B cell (primary cell): ENCODE measurements at regions of chr14 and their contacts with region 1.

Region 1: GRCh38 chr14:91060351-91061055 is at the start of gene RPS6KA5:
- DNase-seq: peak; percentile 100
- ATAC-seq: peak; percentile 80
- H3K4me3 ChIP-seq: peak within 1 kb of the TSS; percentile 80 to 97 (median 87)
- H3K4me3 Mint-ChIP-seq: peak within 1 kb of the TSS; percentile 86
- H3K27ac ChIP-seq: peak within 1 kb of the TSS; percentile 97 to 98
- H3K27ac Mint-ChIP-seq: peak within 1 kb of the TSS; percentile 83
- H3K4me1 ChIP-seq: peaks cover 26 to 35% of the 10 kb centered on the region in 2 donors
- H3K4me1 Mint-ChIP-seq: peaks cover 46% of the 10 kb centered on the region
- H3K27me3 ChIP-seq: no peaks in the 10 kb centered on the region
- H3K27me3 Mint-ChIP-seq: no peaks in the 10 kb centered on the region
- CTCF ChIP-seq: peak; percentile 12
- total RNA-seq, gene RPS6KA5: 33.8 and 34.6 TPM in 2 replicates

Region 2: GRCh38 chr14:90827916-90828610 is 232.4 kb before region 1 on chr14:
- CTCF ChIA-PET with region 1: no interaction called
- POLR2A ChIA-PET with region 1: no interaction called
- intact Hi-C with region 1: loop called (anchors 2 kb)
- DNase-seq: peak; percentile 92
- ATAC-seq: peak; percentile 100
- H3K4me3 ChIP-seq: peak overlapping the region; percentile 44 to 58 (median 51)
- H3K4me3 Mint-ChIP-seq: peak overlapping the region; percentile 77
- H3K27ac ChIP-seq: peak overlapping the region; percentile 61 to 75
- H3K27ac Mint-ChIP-seq: peak overlapping the region; percentile 80
- H3K4me1 ChIP-seq: peaks cover 13 to 16% of the 10 kb centered on the region in 2 donors
- H3K4me1 Mint-ChIP-seq: peaks cover 16% of the 10 kb centered on the region
- H3K27me3 ChIP-seq: no peaks in the 10 kb centered on the region
- H3K27me3 Mint-ChIP-seq: no peaks in the 10 kb centered on the region
- CTCF ChIP-seq: no peak

Region 3: DNA sequence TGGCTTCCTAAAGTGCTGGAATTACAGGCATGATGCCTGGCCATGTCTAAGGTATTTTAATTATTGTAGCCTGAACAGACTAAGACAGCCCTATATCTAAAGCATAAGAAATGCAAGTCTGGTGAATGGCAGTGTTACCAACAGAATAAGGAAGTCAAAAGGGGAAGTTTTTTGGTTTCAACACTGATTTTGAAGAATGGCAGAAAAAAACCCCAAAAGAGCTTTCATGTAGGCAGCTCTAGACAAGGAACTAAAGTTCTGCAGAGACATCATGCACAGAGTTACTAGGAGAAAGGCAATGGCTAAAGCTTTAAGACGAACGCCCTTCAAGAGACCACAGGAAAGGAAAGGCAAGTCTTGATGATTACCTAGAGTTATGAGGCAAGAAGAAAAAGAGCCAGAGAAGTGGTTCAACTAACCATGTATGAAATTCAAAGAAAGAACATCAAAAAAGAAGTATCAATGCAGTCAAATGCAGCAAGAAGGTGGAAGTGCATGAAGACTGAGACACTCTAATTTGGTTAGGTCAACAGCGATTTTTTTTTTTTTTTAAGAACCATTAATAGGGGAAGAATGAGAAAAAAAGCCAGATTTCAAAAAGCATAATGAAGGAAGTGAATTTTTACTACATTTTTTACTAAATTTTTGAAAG is 50.9 kb before region 1 on chr14:
- CTCF ChIA-PET with region 1: interaction called, 6 read pairs
- POLR2A ChIA-PET with region 1: interaction called, 17 read pairs
- intact Hi-C with region 1: loop called (anchors 1 kb)
- DNase-seq: peak; percentile 90
- ATAC-seq: peak; percentile 90
- H3K4me3 ChIP-seq: peak overlapping the region in 3 of 5 experiments; percentile 12 to 49 (median 21)
- H3K4me3 Mint-ChIP-seq: peak overlapping the region; percentile 75
- H3K27ac ChIP-seq: peak overlapping the region; percentile 73 to 90
- H3K27ac Mint-ChIP-seq: peak overlapping the region; percentile 92
- H3K4me1 ChIP-seq: peaks cover 61 to 69% of the 10 kb centered on the region in 2 donors
- H3K4me1 Mint-ChIP-seq: peaks cover 52% of the 10 kb centered on the region
- H3K27me3 ChIP-seq: no peaks in the 10 kb centered on the region
- H3K27me3 Mint-ChIP-seq: no peaks in the 10 kb centered on the region
- CTCF ChIP-seq: no peak

Region 4: GRCh38 chr14:91138511-91139359 is 78.2 kb after region 1 on chr14:
- CTCF ChIA-PET with region 1: interaction called, 3 read pairs
- POLR2A ChIA-PET with region 1: interaction called, 3 read pairs
- intact Hi-C with region 1: loop called (anchors 1 kb)
- DNase-seq: peak; percentile 65
- ATAC-seq: peak; percentile 19
- H3K4me3 ChIP-seq: no peak overlapping the region
- H3K4me3 Mint-ChIP-seq: no peak overlapping the region
- H3K27ac ChIP-seq: no peak overlapping the region
- H3K27ac Mint-ChIP-seq: peak overlapping the region; percentile 71
- H3K4me1 ChIP-seq: peaks cover 12 to 21% of the 10 kb centered on the region in 2 donors
- H3K4me1 Mint-ChIP-seq: peaks cover 37% of the 10 kb centered on the region
- H3K27me3 ChIP-seq: no peaks in the 10 kb centered on the region
- H3K27me3 Mint-ChIP-seq: no peaks in the 10 kb centered on the region
- CTCF ChIP-seq: peak; percentile 36

Region 5: GRCh38 chr14:91367173-91368171 is 307.0 kb after region 1 on chr14:
- CTCF ChIA-PET with region 1: no interaction called
- POLR2A ChIA-PET with region 1: no interaction called
- intact Hi-C with region 1: loop called (anchors 5 kb)
- DNase-seq: peak; percentile 97
- ATAC-seq: peak; percentile 77
- H3K4me3 ChIP-seq: peak overlapping the region in 1 of 5 experiments; percentile 13
- H3K4me3 Mint-ChIP-seq: peak overlapping the region; percentile 84
- H3K27ac ChIP-seq: peak overlapping the region; percentile 88 to 98
- H3K27ac Mint-ChIP-seq: peak overlapping the region; percentile 98
- H3K4me1 ChIP-seq: peaks cover 78 to 94% of the 10 kb centered on the region in 2 donors
- H3K4me1 Mint-ChIP-seq: peaks cover 89% of the 10 kb centered on the region
- H3K27me3 ChIP-seq: no peaks in the 10 kb centered on the region
- H3K27me3 Mint-ChIP-seq: no peaks in the 10 kb centered on the region
- CTCF ChIP-seq: no peak

Region 6: GRCh38 chr14:91836119-91836881 is 775.8 kb after region 1 on chr14:
- CTCF ChIA-PET with region 1: no interaction called
- POLR2A ChIA-PET with region 1: no interaction called
- intact Hi-C with region 1: loop called (anchors 10 kb)
- DNase-seq: peak; percentile 91
- ATAC-seq: peak; percentile 93
- H3K4me3 ChIP-seq: peak overlapping the region; percentile 47 to 77 (median 58)
- H3K4me3 Mint-ChIP-seq: peak overlapping the region; percentile 92
- H3K27ac ChIP-seq: peak overlapping the region in 1 of 2 donors; percentile 45
- H3K27ac Mint-ChIP-seq: peak overlapping the region; percentile 77
- H3K4me1 ChIP-seq: peaks cover 30 to 35% of the 10 kb centered on the region in 2 donors
- H3K4me1 Mint-ChIP-seq: peaks cover 37% of the 10 kb centered on the region
- H3K27me3 ChIP-seq: peaks cover 0 to 31% (median 3%) of the 10 kb centered on the region in 4 experiments
- H3K27me3 Mint-ChIP-seq: peaks cover 12% of the 10 kb centered on the region
- CTCF ChIP-seq: peak; percentile 25